ENCODE measurements at regions of chr5 and their contacts with region 1.

Region 1: GRCh38 chr5:140244525-140245025 is 58.3 kb downstream of the PFDN1 start:
- DNase-seq: peak; percentile 76 to 91
- ATAC-seq: peak; percentile 27 to 44
- H3K4me3 ChIP-seq: no peak overlapping the region
- H3K27ac ChIP-seq: peak overlapping the region; percentile 87 to 93 (median 92)
- H3K4me1 ChIP-seq: peaks cover 77 to 86% of the 10 kb centered on the region in 2 donors
- H3K27me3 ChIP-seq: no peaks in the 10 kb centered on the region
- CTCF ChIP-seq: peak; percentile 93 to 97 (median 95)
- POLR2A ChIP-seq: no peak

Region 2: DNA sequence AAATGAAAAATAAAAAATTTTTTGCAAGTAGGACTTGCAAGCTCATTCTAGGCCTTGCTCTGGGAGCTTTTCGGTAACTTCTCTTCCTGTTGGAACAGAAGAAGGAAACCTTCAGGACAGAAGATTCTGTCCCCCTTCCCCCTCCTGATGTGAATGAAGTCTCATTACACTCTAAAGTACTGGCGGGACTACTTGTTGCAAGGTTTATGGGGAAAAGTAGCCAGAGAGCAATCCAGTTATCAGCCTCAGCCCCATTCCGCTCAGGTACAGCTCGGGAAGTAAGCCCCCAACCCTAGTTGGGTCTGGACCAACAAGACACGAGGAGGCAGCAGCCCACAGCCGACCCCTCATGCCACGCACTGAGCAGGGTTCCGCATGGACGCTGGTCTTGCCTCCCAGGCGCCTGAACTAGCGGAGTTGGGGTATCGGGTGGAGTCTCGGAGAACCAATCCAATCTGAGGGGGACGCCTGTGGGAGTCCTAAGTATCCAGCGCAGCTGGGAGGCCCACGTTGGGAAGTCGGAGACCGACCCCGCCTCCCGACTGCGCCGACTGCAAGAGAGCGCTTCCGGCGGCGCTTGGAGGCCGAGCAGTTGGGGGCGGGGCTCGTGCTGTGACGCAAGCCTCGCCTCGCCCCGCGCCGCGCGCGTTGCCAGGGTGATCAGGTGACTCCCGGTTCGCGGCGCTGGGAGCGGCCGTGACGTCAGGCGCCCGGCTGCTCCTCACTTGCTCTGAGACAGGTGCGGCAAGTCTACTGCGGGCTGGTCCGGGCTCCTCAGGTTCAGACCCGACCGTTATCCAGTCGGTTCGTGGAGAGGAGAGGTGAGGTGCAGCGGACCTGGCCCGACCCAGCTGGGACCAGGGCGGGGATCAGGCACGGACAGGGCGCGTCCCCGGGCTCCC is 69.9 kb before region 1 on chr5 and contains the start of gene CYSTM1:
- in situ Hi-C with region 1: no loop called
- intact Hi-C with region 1: loop called (anchors 5 kb)
- DNase-seq: peak; percentile 94 to 97
- ATAC-seq: peak; percentile 74 to 76
- H3K4me3 ChIP-seq: peak within 1 kb of the TSS; percentile 87 to 98 (median 88)
- H3K27ac ChIP-seq: peak within 1 kb of the TSS; percentile 97 to 99 (median 98)
- H3K4me1 ChIP-seq: peaks cover 35 to 37% of the 10 kb centered on the region in 2 donors
- H3K27me3 ChIP-seq: no peaks in the 10 kb centered on the region
- CTCF ChIP-seq: peak in 1 of 5 experiments; percentile 40
- POLR2A ChIP-seq: peak; percentile 98 to 99
- total RNA-seq, gene CYSTM1: 304 to 593 (median 336) TPM

Region 3: GRCh38 chr5:140261403-140262171 is 17.0 kb after region 1 on chr5:
- in situ Hi-C with region 1: no loop called
- intact Hi-C with region 1: loop called (anchors 1 kb)
- DNase-seq: peak; percentile 85 to 89
- ATAC-seq: peak; percentile 97 to 98
- H3K4me3 ChIP-seq: peak overlapping the region; percentile 21 to 32 (median 28)
- H3K27ac ChIP-seq: peak overlapping the region; percentile 86 to 95 (median 89)
- H3K4me1 ChIP-seq: peaks cover 31 to 60% of the 10 kb centered on the region in 2 donors
- H3K27me3 ChIP-seq: no peaks in the 10 kb centered on the region
- CTCF ChIP-seq: no peak
- POLR2A ChIP-seq: peak in 1 of 2 donors; percentile 6

Region 4: DNA sequence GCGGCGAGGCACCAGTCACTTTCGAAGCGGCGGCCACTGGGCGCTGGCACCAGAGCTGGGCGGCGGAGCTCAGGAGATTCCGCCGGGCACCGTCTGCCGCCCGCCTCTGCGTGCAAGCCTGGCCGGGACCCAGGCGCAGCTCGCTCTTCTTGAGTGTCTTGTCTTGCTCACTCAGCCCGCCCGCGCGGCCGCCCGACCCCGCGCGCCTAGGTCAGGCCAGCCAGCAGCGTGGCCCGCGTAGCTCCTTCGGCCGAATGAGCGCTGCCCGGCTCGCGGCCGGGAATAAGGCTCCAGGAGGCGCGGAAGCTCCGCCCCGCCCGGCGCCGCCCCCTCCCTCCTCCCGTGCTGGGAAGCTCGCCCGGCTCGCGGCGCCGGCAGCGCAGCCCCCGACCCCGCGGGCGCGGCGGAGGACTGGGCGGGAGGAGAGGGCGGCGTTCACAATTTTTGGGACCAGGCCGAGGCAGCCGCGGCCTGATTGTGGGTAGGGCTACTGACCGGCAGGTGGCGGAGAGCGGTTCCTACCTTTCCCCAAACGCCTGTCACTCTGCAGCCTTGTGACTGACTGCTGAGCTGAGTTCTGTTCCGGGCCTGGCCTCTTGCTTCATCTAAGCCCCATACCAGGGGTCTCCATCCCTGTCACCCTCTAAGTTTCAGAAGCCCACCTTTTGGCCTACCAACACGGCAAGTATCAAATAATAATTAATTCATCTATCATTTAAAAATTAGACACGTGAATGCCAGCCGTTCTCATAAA is 102.0 kb after region 1 on chr5 and contains the start of gene HBEGF:
- in situ Hi-C with region 1: loop called (anchors 5 kb)
- intact Hi-C with region 1: loop called (anchors 1 kb)
- DNase-seq: peak; percentile 82 to 88
- ATAC-seq: peak; percentile 69 to 71
- H3K4me3 ChIP-seq: peak within 1 kb of the TSS; percentile 75 to 98 (median 78)
- H3K27ac ChIP-seq: peak within 1 kb of the TSS; percentile 91 to 97 (median 94)
- H3K4me1 ChIP-seq: peaks cover 56 to 57% of the 10 kb centered on the region in 2 donors
- H3K27me3 ChIP-seq: no peaks in the 10 kb centered on the region
- CTCF ChIP-seq: peak; percentile 46 to 73 (median 60)
- POLR2A ChIP-seq: peak; percentile 90 to 97
- total RNA-seq, gene HBEGF: 5.3 to 22.2 (median 17.6) TPM

Region 5: DNA sequence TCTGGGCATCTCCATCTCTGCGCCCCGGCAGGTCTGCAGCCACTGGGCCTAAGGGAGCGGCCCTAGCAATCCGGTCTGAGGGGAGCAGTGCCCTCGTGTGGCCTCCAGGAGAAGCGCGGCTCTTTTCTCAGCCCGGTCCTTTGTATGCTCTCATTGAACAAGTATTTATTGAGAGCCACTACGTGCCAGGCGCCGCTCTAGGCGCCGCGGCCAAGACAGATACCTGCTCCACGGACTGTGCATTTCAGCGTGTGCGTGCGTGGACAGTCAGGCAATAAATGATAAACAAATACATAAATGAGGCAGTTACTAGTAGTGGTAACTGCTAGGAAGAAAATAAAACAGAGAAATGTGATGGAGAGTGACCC is 113.1 kb after region 1 on chr5:
- in situ Hi-C with region 1: loop called in 3 of 4 experiments (anchors 5 kb)
- intact Hi-C with region 1: loop called (anchors 1 kb)
- DNase-seq: peak; percentile 63 to 79
- ATAC-seq: peak; percentile 84 to 91
- H3K4me3 ChIP-seq: peak overlapping the region in 3 of 4 donors; percentile 25 to 59 (median 37)
- H3K27ac ChIP-seq: no peak overlapping the region
- H3K4me1 ChIP-seq: peaks cover 3 to 8% of the 10 kb centered on the region in 2 donors
- H3K27me3 ChIP-seq: no peaks in the 10 kb centered on the region
- CTCF ChIP-seq: peak; percentile 78 to 94 (median 86)
- POLR2A ChIP-seq: no peak

Region 6: DNA sequence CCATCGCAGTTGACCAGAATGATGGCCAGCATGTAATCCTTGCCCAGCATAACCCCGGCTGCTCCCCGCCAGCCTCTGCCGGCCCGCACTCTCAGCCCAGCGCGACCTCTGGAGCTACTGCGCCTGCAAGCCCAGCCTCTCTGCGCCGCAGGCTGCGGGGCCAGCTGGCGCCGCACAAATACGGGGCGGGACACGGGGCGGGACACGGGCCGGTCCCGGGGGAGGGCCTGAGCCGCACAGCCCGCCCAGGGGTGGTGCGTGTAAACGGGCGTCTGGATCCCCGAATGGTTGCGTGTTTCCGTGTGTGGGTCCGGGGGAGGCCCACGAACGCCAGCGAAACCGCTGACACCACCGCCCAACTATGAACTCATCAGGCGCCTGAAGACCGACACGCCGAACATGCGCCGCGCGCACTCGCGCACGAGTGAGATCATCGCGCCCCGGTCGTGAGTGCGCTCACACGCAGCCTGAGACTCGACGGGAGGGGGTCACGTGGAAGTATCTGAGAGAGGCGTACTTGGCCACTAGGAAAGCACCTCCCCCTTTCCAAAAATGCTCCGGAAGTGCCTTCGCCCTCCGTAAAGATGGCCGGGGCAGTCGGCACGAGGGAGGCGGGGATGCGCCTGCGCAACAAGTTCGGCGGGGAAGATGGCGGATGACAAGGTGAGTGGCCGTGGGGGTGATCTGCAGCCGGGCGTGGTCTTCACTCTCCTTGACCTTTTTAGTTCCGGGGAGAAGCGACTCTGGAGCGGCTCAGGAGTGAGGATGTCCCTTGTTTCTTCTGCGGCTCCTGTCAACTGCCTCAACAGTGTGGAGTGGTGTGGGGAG is 319.8 kb after region 1 on chr5 and contains the starts of genes APBB3 and SLC35A4:
- in situ Hi-C with region 1: loop called in 1 of 4 experiments (anchors 25 kb)
- intact Hi-C with region 1: loop called (anchors 10 kb)
- DNase-seq: peak; percentile 98 to 99
- ATAC-seq: peak; percentile 85 to 92
- H3K4me3 ChIP-seq: peak within 1 kb of the TSS; percentile 77 to 92 (median 84)
- H3K27ac ChIP-seq: peak within 1 kb of the TSS; percentile 97 to 99 (median 98)
- H3K4me1 ChIP-seq: peaks cover 62% of the 10 kb centered on the region in 2 donors
- H3K27me3 ChIP-seq: no peaks in the 10 kb centered on the region
- CTCF ChIP-seq: no peak
- POLR2A ChIP-seq: peak; percentile 92
- total RNA-seq, gene APBB3: 4.1 to 12.5 (median 9.0) TPM
- total RNA-seq, gene SLC35A4: 71.7 to 152 (median 114) TPM

Region 7: DNA sequence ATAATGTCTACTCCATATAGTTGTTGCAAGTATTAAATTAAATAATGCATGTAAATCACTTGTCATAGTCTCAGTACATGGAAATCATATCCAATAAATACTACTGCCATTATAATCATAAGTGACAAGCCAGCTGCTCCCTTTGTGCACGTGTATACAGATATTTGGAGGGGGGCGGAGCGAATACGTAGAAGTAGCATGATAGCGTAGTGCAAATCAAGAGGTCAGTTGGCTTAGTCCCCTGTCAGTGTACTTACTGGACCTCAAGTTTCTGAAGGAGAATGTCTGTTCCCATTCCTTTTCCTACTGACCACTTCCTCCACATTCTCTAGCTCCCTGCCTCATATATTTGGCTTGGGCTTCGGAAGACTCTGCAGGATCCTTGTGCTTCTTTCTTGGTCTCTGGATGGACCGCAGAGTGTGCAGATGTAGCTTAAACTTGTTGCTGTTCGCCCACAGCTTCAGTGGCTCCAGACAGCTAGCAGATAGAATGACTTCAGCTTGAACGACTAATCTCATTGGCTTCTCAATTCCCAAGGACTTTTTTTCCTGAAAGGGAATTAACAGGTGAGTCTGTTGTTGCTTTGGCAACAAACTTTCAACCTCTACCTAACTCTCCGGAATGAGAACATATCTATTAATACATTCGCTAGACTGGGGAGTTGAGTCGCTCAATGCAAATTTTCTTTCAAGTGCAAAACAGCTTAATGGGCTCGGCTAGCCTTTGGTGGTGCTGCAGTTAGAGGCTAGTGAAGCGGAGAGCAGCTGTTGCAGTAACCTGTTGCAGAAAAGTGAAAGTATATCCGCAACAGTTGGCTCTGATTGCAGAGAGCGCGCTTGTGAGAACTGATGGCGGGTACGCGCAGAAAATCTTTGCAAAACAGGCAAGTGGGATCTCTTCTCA is 806.3 kb after region 1 on chr5 and contains the start of gene PCDHB1:
- in situ Hi-C with region 1: no loop called
- intact Hi-C with region 1: no loop called
- DNase-seq: no peak
- ATAC-seq: no peak
- H3K4me3 ChIP-seq: peak within 1 kb of the TSS; percentile 50 to 62 (median 55)
- H3K27ac ChIP-seq: no peak within 1 kb of the TSS
- H3K4me1 ChIP-seq: no peaks in the 10 kb centered on the region
- H3K27me3 ChIP-seq: peaks cover 0 to 13% (median 11%) of the 10 kb centered on the region in 3 donors
- CTCF ChIP-seq: no peak
- POLR2A ChIP-seq: no peak
- total RNA-seq, gene PCDHB1: not detected

Measured in gastrocnemius medialis (tissue), 4 donors.